Pancreas (tissue), 10 donors: ENCODE measurements at regions of chr18 and their contacts with region 1.

Region 1: DNA sequence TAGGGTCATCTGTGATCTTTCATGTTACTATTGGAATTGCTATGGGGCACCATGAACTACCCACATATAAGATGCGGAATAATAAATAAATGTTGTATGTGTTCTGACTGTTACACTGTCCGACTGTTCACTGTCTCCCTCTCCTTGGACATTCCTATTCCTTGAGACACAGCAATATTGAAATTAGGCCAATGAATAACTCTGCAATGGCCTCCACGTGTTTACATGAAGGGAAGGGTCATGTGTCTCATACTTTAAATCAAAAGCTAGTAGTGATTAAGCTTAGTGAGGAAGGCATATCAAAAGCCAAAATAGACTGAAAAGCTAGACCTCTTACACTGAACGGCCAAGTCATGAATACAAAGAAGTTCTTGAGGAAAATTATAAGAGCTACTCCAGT is 751.3 kb downstream of the SOCS6 start:
- DNase-seq: no peak
- ATAC-seq: no peak
- H3K4me3 ChIP-seq: no peak overlapping the region
- H3K27ac ChIP-seq: no peak overlapping the region
- H3K4me1 ChIP-seq: no peaks in the 10 kb centered on the region
- H3K27me3 ChIP-seq: no peaks in the 10 kb centered on the region
- CTCF ChIP-seq: no peak

Region 2: GRCh38 chr18:70981400-70982140 is 58.6 kb before region 1 on chr18:
- intact Hi-C with region 1: loop called in 1 of 3 experiments (anchors 10 kb)
- DNase-seq: no peak
- ATAC-seq: no peak
- H3K4me3 ChIP-seq: no peak overlapping the region
- H3K27ac ChIP-seq: no peak overlapping the region
- H3K4me1 ChIP-seq: no peaks in the 10 kb centered on the region
- H3K27me3 ChIP-seq: no peaks in the 10 kb centered on the region
- CTCF ChIP-seq: no peak